ENCODE measurements at regions of chr5 and their contacts with region 1.

Region 1: GRCh38 chr5:53170748-53171349 is 61.3 kb upstream of the MOCS2 start:
- DNase-seq: no peak
- ATAC-seq: no peak
- H3K4me3 ChIP-seq: no peak overlapping the region
- H3K27ac ChIP-seq: no peak overlapping the region
- H3K4me1 ChIP-seq: peaks cover 4% of the 10 kb centered on the region
- H3K27me3 ChIP-seq: no peaks in the 10 kb centered on the region

Region 2: DNA sequence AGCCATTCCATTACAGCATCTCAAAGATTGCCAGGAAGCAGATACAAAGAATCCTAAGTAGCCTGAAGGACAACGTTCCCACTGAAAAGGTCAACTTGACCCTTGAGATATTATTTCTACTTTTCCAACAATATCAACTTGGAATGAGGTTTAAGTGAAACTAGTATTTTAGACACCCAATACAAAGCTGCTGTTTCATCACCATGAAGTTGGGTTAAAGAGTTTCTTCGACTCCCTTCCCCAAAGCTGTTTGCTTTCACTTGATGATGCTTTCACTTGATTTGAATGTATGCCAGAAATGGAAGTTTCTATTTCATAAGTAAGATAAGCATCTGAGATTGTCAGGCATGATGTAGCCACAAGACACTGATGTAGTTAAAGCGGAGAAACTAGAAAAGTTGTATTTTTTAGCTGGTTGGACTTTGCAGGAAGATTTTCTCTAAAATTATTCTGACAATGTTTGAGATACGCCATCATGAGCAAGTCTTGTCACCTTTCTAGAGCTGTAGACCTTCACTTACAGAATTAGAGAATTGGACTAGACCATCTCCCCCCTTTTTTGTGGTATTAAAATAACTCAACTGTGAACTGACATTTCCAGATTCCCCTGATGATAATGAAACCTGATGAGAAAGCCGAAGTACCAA is 81.4 kb before region 1 on chr5:
- intact Hi-C with region 1: no loop called
- DNase-seq: no peak
- ATAC-seq: no peak
- H3K4me3 ChIP-seq: no peak overlapping the region
- H3K27ac ChIP-seq: no peak overlapping the region
- H3K4me1 ChIP-seq: no peaks in the 10 kb centered on the region
- H3K27me3 ChIP-seq: no peaks in the 10 kb centered on the region

Region 3: DNA sequence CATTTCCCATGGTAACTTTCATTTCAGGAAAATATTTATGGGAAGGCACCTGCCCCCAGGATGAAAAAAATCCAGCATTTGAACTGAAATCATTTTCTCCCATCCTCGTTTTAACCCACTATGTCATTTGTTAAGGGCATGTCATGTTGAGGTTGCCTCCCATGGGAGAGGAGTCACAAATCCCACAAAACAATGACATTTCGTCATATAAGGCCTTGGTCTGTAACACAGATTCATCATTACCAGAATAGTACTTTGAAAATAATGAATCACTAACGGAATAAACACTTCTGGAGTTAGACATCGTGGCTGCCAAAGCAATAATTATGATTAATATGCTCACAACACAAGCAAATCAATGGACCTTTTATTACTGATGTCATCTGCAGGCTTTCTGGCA is 663.7 kb after region 1 on chr5:
- intact Hi-C with region 1: no loop called
- DNase-seq: no peak
- ATAC-seq: no peak
- H3K4me3 ChIP-seq: no peak overlapping the region
- H3K27ac ChIP-seq: no peak overlapping the region
- H3K4me1 ChIP-seq: no peaks in the 10 kb centered on the region
- H3K27me3 ChIP-seq: no peaks in the 10 kb centered on the region

Region 4: GRCh38 chr5:54217826-54218503 is 1047.1 kb after region 1 on chr5:
- intact Hi-C with region 1: loop called in 2 of 4 experiments (anchors 10 kb)
- DNase-seq: no peak
- ATAC-seq: peak; percentile 84 to 85
- H3K4me3 ChIP-seq: no peak overlapping the region
- H3K27ac ChIP-seq: no peak overlapping the region
- H3K4me1 ChIP-seq: peaks cover 1% of the 10 kb centered on the region
- H3K27me3 ChIP-seq: no peaks in the 10 kb centered on the region

Region 5: GRCh38 chr5:54229041-54229780 is 1058.4 kb after region 1 on chr5:
- intact Hi-C with region 1: loop called in 1 of 4 experiments (anchors 10 kb)
- DNase-seq: peak; percentile 66 to 87 (median 83)
- ATAC-seq: peak; percentile 63 to 67
- H3K4me3 ChIP-seq: no peak overlapping the region
- H3K27ac ChIP-seq: no peak overlapping the region
- H3K4me1 ChIP-seq: peaks cover 3% of the 10 kb centered on the region
- H3K27me3 ChIP-seq: no peaks in the 10 kb centered on the region